ENCODE measurements at regions of chr3 and their contacts with region 1.

Region 1: GRCh38 chr3:42425736-42426407 is 15.5 kb upstream of the LYZL4 start:
- DNase-seq: no peak
- H3K4me3 ChIP-seq: no peak overlapping the region
- H3K27ac ChIP-seq: no peak overlapping the region
- H3K4me1 ChIP-seq: no peaks in the 10 kb centered on the region
- H3K27me3 ChIP-seq: peaks cover 5% of the 10 kb centered on the region
- CTCF ChIP-seq: no peak

Region 2: DNA sequence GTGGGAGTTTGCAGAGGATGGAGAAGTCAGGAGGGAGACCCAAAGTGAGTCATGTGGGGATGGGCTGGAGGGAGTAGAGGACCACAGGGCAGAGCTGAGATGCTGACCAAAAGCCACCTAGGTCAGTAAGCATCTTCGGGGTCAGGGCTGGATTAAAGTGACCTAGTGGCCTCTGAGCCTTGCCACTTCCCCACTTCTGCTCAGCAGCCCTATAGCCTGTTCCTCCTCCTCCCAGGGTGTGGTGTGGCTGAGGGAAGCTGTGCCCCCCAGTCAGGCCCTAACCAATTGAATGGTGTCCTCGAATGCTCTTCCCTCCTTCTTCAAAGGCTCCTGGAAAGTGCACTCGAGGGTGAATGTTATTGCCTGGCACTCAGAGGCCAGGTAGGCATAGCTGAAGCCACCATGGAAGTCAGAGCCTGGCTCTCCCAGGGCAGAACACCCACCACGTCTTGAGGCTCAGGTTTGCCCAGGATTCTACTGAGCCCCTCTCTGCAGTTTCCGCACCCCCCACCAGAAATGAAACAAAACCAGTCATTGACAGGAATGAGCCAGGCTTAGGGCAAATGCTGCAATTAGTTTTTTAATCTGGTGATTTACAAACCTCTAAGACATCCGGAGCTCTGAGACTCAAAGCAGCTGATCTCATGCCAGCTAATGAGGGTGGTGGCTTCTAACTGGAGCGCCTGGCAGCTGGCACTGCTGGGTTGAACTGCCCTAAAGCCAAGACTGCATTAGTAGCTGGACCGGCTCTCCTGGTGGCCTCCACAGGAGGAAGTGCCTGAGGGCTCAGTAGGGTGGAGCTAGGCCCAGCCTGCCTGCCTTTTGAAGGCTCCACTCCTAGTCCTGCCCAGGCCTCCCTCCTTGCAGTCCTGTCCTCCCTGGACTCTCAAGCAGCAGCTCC is 50.6 kb after region 1 on chr3:
- CTCF ChIA-PET with region 1: no interaction called
- dilution Hi-C with region 1: no loop called
- in situ Hi-C with region 1: no loop called
- intact Hi-C with region 1: loop called (anchors 2 kb)
- DNase-seq: peak; percentile 81
- H3K4me3 ChIP-seq: no peak overlapping the region
- H3K27ac ChIP-seq: no peak overlapping the region
- H3K4me1 ChIP-seq: peaks cover 28% of the 10 kb centered on the region
- H3K27me3 ChIP-seq: no peaks in the 10 kb centered on the region
- CTCF ChIP-seq: no peak

Region 3: DNA sequence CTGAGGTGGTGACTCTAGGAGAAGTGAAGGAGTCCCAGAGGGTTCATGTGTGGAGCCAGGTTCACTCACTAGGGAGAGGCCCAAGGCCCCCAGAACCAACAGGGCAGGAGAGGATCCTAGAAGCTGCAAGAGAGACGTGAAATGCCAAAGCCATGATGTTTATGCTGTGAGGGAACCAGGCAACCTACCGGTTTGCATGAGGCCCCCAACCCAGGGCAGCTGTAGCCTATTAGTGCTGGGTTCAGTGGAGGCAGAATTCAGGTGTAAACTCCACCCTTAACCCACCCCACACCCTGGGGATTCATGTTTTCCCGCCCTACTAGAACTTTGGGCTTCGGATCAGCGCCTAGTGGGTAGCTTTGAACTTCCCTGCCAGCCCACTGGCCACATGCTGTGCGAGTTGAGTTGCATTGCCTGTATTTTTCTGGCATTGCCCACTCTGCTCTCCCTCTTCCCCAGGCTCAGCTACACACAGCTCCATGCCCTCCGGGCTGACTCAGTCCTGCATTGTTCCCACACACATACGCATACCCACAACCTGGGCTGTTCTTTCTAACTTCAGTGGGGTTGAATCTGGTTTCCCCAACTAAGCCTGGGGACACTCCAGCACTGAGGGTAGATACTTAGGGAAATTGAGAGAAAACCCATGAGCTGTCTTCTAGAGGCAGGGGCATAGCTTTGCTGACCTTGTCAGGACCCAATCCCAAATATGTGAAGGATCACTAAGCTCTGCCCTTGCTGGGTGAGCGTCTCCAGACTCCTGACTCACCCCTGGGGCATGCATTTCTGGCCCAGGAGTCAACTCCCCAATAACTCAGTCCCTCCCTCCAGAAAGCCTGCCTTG is 225.6 kb after region 1 on chr3:
- CTCF ChIA-PET with region 1: no interaction called
- dilution Hi-C with region 1: no loop called
- in situ Hi-C with region 1: no loop called
- intact Hi-C with region 1: no loop called
- DNase-seq: peak; percentile 70
- H3K4me3 ChIP-seq: no peak overlapping the region
- H3K27ac ChIP-seq: peak overlapping the region; percentile 40
- H3K4me1 ChIP-seq: peaks cover 42% of the 10 kb centered on the region
- H3K27me3 ChIP-seq: no peaks in the 10 kb centered on the region
- CTCF ChIP-seq: no peak

Region 4: DNA sequence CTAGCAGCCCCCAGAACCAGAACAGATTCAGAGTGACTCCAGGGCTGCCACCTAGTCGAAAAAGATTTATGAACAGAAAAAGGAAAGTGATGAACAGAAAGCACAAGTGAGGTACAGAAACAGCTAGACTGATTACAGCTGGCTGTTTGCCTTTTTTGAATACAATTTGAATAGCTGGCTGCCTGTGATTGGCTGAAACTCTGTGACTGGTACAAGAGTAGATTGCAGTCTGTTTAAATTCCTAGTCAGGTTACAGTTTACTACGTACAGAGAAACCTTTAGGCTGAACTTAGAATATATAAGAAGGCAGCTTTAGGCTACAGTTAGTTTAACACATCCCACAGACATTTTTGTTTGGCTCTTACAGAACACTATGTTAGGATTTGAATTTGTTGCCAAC is 337.1 kb after region 1 on chr3:
- CTCF ChIA-PET with region 1: no interaction called
- dilution Hi-C with region 1: loop called (anchors 10 kb)
- in situ Hi-C with region 1: no loop called
- intact Hi-C with region 1: no loop called
- DNase-seq: no peak
- H3K4me3 ChIP-seq: no peak overlapping the region
- H3K27ac ChIP-seq: no peak overlapping the region
- H3K4me1 ChIP-seq: no peaks in the 10 kb centered on the region
- H3K27me3 ChIP-seq: no peaks in the 10 kb centered on the region
- CTCF ChIP-seq: no peak